OCI-LY7 (cell line): ENCODE measurements at regions of chr13 and their contacts with region 1.

Region 1: GRCh38 chr13:40777166-40777808 is 6.3 kb upstream of the MRPS31 start:
- DNase-seq: peak; percentile 86
- H3K4me3 ChIP-seq: peak overlapping the region; percentile 48
- H3K27ac ChIP-seq: peak overlapping the region; percentile 59
- H3K4me1 ChIP-seq: peaks cover 51% of the 10 kb centered on the region
- CTCF ChIP-seq: peak; percentile 99

Region 2: DNA sequence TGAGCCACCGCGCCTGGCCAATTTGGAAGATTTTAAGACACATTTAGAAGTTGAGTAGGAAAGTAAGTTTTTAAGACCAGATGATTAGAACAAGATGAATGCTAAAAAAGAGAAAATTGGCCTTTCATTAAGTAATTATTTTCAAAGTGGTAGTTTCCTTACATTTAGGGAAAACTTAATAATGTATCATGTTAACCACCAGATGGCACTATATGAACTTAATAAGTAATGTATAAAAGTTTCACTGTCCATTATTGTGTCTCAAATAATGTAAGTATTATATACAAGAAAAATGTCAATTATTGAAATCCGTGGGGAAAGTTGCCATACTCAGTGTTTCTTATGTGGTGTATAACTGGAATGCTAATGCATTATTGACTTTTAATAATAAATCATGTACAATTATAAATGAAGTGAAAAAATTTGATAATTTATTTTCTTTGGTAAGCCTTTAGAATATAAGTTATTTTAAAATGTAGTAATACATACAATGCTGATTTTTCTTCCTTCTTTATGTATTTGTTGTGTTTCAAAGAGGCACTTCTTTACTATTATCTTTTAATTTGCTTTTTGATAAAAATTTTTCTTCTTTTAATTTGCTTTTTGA is 1092.7 kb before region 1 on chr13:
- CTCF ChIA-PET with region 1: no interaction called
- POLR2A ChIA-PET with region 1: no interaction called
- intact Hi-C with region 1: loop called (anchors 2 kb)
- DNase-seq: peak; percentile 81
- H3K4me3 ChIP-seq: no peak overlapping the region
- H3K27ac ChIP-seq: no peak overlapping the region
- H3K4me1 ChIP-seq: peaks cover 13% of the 10 kb centered on the region
- CTCF ChIP-seq: peak; percentile 80

Region 3: DNA sequence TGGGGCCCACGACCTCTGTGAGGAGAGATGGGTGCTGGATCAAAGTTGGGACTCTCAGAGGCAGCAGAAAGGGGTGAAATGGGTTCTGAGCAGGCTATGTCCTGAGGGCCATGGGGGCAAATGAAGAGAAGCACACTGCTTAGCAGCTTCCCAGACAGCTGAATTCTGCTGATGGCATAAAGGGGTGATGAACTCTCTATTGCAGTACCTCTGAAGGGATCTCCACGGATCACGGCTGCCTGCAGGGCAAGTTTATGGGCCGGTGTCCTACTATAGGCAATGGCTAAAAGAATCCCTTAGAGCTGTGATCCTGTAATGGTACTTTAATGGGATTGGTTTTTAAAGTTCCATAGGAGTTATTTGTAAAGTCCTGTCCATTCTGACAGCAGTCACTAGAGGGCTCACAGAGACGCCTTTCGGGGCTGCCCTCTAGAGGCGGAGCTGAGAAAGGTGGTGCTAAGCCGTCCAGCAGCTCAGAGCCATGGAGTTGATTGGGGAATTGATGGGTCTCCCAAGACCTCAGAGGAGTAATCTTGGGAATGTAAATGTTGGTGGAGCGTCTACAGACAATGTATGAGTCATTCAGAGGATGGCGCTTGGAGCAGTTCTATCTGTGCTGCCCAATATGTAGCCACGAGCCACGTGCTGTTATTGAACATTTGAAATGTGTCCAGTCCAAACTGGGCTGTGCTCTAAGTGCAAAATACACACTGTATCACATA is 834.6 kb before region 1 on chr13:
- CTCF ChIA-PET with region 1: no interaction called
- POLR2A ChIA-PET with region 1: no interaction called
- intact Hi-C with region 1: loop called (anchors 5 kb)
- DNase-seq: peak; percentile 86
- H3K4me3 ChIP-seq: no peak overlapping the region
- H3K27ac ChIP-seq: no peak overlapping the region
- H3K4me1 ChIP-seq: peaks cover 4% of the 10 kb centered on the region
- CTCF ChIP-seq: peak; percentile 100

Region 4: GRCh38 chr13:40069173-40070044 is 707.9 kb before region 1 on chr13:
- CTCF ChIA-PET with region 1: no interaction called
- POLR2A ChIA-PET with region 1: no interaction called
- intact Hi-C with region 1: loop called (anchors 2 kb)
- DNase-seq: peak; percentile 81
- H3K4me3 ChIP-seq: no peak overlapping the region
- H3K27ac ChIP-seq: no peak overlapping the region
- H3K4me1 ChIP-seq: peaks cover 24% of the 10 kb centered on the region
- CTCF ChIP-seq: peak; percentile 98

Region 5: GRCh38 chr13:40692946-40693345 is 84.3 kb before region 1 on chr13:
- CTCF ChIA-PET with region 1: interaction called, 3 read pairs
- POLR2A ChIA-PET with region 1: interaction called, 5 read pairs
- intact Hi-C with region 1: loop called (anchors 2 kb)
- DNase-seq: no peak
- H3K4me3 ChIP-seq: no peak overlapping the region
- H3K27ac ChIP-seq: peak overlapping the region; percentile 64
- H3K4me1 ChIP-seq: peaks cover 66% of the 10 kb centered on the region
- CTCF ChIP-seq: no peak

Region 6: DNA sequence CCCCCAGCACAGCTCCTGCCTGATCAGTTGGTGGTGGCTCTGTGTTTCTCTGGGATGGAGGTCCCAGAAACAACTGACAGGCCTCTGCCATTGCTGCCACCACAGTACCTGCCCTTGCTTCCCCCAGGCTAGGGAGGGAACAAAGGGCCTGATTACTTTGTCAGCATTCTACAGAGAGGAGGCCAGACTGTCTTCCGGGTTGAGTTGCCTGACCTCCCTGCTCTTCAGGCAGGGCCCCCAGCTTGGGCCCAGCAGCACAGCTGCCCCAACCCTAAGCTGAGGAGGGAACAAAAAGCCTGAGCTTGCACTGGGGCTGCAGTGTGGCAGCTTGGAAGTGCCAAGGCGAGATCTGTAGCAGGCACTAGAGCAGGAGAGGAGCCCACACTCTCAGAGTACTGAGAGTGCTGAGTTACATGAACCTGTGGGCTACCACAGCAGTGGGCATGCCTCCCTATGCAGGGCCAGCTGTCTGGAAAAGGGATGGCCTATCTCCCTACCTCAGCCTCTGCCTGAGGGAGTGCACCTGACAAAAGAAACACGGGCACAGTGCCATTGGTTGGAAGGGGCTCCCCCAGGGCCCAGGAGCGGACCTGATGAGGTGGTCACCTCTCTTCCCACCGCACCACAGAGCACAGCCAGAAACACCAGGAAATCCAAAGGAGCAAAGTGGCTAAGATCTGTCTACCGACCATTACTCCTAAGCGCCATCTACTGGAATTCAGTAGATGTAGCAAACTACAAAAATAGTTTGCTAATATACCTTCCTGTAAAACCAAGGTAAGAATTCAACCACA is 36.6 kb after region 1 on chr13:
- CTCF ChIA-PET with region 1: interaction called, 5 read pairs
- POLR2A ChIA-PET with region 1: interaction called, 4 read pairs
- intact Hi-C with region 1: loop called (anchors 1 kb)
- DNase-seq: peak; percentile 73
- H3K4me3 ChIP-seq: no peak overlapping the region
- H3K27ac ChIP-seq: no peak overlapping the region
- H3K4me1 ChIP-seq: peaks cover 16% of the 10 kb centered on the region
- CTCF ChIP-seq: peak; percentile 91